Heart left ventricle (tissue), 16 donors: ENCODE measurements at regions of chrX and their contacts with region 1.

Region 1: GRCh38 chrX:17812763-17813162 is 48.3 kb downstream of the RAI2 start:
- DNase-seq: no peak
- ATAC-seq: peak in 3 of 4 donors; percentile 48 to 63 (median 53)
- H3K4me3 ChIP-seq: no peak overlapping the region
- H3K27ac ChIP-seq: no peak overlapping the region
- H3K4me1 ChIP-seq: peaks cover 0 to 17% (median 2%) of the 10 kb centered on the region in 12 donors
- H3K27me3 ChIP-seq: no peaks in the 10 kb centered on the region
- CTCF ChIP-seq: peak; percentile 37 to 68 (median 55)
- POLR2A ChIP-seq: no peak

Region 2: DNA sequence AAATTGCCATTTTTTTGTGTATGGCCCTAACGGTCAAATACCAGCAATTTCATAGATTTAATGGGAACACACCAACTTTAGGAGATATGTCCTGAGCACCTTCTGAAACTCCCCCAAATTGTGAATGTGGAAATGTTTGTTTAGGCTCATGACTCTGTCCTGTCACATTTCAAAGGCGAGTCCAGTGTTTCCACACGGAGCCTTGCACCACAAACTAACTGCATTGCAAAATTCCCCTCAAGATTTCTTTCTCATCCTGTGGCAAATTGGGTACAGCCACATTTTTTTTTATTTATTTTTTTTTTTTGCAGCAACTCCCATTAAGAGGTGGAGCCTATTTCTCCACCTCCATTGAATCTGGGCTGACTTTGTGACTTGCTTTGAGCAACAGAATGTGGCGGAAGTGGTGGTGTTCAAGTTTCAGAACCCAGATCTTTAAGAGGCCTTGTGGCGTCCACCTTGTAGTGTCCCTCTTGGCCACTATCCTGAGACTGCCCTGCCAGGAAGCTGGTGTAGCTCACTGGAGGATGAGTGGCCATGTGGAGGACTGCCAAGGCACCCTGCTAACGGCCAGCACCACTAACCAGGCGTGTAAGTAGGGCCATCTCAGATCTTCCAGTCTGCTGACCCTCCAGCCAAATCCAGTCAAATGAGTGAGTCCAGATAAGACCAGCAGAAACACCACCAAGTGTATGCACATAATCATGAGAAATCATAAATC is 247.9 kb before region 1 on chrX:
- intact Hi-C with region 1: no loop called
- DNase-seq: peak in 1 of 5 donors; percentile 36
- ATAC-seq: no peak
- H3K4me3 ChIP-seq: no peak overlapping the region
- H3K27ac ChIP-seq: no peak overlapping the region
- H3K4me1 ChIP-seq: peaks cover 0 to 19% (median 0%) of the 10 kb centered on the region in 12 donors
- H3K27me3 ChIP-seq: peaks cover 0 to 1% (median 0%) of the 10 kb centered on the region in 9 donors
- CTCF ChIP-seq: no peak
- POLR2A ChIP-seq: no peak

Region 3: DNA sequence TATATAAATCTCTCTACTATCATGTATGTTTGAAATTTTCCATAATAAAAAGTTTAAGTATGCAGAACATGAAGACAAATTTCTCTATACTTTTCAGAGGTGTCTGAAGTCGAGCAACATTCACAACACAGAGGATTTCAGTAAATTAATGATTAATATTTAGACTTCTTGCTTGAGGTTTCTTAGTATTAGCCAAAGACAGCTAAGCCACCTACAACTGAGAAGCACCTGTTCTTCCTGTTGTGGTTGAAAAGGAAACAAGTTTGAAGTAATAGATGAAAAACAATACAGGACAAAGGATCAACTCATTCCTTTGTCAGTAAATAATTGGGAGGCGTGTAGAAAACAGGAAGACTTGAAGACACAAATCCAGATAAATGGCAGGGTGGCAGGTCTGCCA is 54.4 kb before region 1 on chrX:
- intact Hi-C with region 1: no loop called
- DNase-seq: no peak
- ATAC-seq: no peak
- H3K4me3 ChIP-seq: no peak overlapping the region
- H3K27ac ChIP-seq: no peak overlapping the region
- H3K4me1 ChIP-seq: no peaks in the 10 kb centered on the region
- H3K27me3 ChIP-seq: no peaks in the 10 kb centered on the region
- CTCF ChIP-seq: no peak
- POLR2A ChIP-seq: no peak

Region 4: GRCh38 chrX:17876164-17876563 is 63.4 kb after region 1 on chrX:
- intact Hi-C with region 1: loop called in 3 of 10 experiments (anchors 5 to 10 kb)
- DNase-seq: no peak
- ATAC-seq: no peak
- H3K4me3 ChIP-seq: no peak overlapping the region
- H3K27ac ChIP-seq: no peak overlapping the region
- H3K4me1 ChIP-seq: no peaks in the 10 kb centered on the region
- H3K27me3 ChIP-seq: peaks cover 0 to 23% (median 0%) of the 10 kb centered on the region in 9 donors
- CTCF ChIP-seq: peak in 2 of 12 donors; percentile 7 to 23
- POLR2A ChIP-seq: no peak